ENCODE measurements at regions of chr15 and their contacts with region 1.

Region 1: GRCh38 chr15:54618120-54618519 is 578.6 kb downstream of the RSL24D1 start:
- DNase-seq: no peak
- ATAC-seq: no peak
- H3K4me3 ChIP-seq: no peak overlapping the region
- H3K27ac ChIP-seq: no peak overlapping the region
- H3K4me1 ChIP-seq: no peaks in the 10 kb centered on the region
- H3K27me3 ChIP-seq: no peaks in the 10 kb centered on the region
- CTCF ChIP-seq: no peak

Region 2: DNA sequence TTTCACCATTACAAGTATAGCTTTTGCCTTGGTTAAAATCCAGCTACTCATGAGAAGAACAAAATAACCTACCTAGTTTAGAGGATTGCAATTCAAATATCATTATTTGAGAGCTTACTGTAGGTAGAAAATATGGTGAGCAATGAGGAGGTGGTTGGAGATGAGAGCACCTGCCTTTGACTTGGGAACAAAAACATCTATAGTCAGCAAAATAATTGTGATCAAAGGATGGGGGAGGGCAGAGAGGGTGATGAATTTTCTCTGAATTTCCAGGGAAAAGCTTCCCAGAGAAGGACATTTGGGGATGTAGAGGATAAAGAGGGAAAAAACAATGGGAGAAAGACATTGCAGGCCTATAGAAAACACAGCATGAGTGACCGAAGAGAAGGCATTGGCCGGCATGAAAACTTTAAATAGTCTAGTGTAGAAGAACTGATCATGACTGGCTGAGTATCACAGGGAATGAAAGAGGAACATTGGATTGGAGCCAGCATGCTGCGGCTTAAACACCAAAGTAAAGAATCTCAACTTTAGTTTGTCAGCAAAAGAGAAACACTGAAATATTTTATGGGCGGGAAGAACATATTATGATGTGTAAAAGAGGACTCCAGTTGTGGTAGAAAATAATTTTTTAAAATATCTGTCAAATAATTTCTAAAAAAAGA is 58.6 kb before region 1 on chr15:
- intact Hi-C with region 1: loop called in 1 of 3 experiments (anchors 10 kb)
- DNase-seq: peak in 1 of 6 donors; percentile 22
- ATAC-seq: peak in 1 of 4 donors; percentile 19
- H3K4me3 ChIP-seq: no peak overlapping the region
- H3K27ac ChIP-seq: no peak overlapping the region
- H3K4me1 ChIP-seq: no peaks in the 10 kb centered on the region
- H3K27me3 ChIP-seq: peaks cover 0 to 3% (median 0%) of the 10 kb centered on the region in 4 donors
- CTCF ChIP-seq: no peak

Measured in pancreas (tissue), 10 donors.